ENCODE measurements at regions of chr1 and their contacts with region 1.

Region 1: DNA sequence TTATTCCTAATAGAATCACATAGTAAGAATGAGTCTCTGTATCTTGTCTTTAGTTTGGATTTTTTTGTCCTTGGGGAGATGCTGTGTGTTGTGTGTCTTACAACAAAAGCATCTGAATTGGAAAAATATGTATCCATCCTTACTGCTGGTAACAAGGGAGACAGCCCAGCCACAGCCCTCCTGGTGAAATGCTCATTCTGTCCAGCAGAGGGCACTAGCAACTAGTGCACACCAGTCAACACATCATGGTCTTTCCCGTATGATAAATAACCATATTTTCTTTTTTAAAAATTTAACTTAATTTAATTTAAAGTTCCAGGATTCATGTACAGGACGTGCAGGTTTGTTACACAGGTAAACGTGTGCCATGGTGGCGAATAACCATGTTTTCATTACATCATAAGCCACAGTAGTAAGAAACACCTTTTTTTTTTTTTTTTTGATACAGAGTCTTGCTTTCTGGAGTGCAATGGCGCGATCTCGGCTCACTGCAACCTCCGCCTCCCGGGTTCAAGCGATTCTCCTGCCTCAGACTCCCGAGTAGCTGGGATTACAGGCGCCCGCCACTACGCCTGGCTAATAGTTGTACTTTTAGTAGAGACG is 245.1 kb downstream of the PTBP2 start:
- DNase-seq: peak; percentile 87
- H3K4me3 Mint-ChIP-seq: no peak overlapping the region
- H3K27ac Mint-ChIP-seq: no peak overlapping the region
- H3K4me1 Mint-ChIP-seq: no peaks in the 10 kb centered on the region
- H3K27me3 Mint-ChIP-seq: peaks cover 31% of the 10 kb centered on the region

Region 2: GRCh38 chr1:98468111-98468717 is 1501.6 kb after region 1 on chr1:
- CTCF ChIA-PET with region 1: no interaction called
- intact Hi-C with region 1: loop called (anchors 5 kb)
- DNase-seq: no peak
- H3K4me3 Mint-ChIP-seq: no peak overlapping the region
- H3K27ac Mint-ChIP-seq: no peak overlapping the region
- H3K4me1 Mint-ChIP-seq: no peaks in the 10 kb centered on the region
- H3K27me3 Mint-ChIP-seq: no peaks in the 10 kb centered on the region

Measured in activated naive CD4-positive, alpha-beta T cell treated with anti-CD3 and anti-CD28 coated beads for 36 hours (primary cell).